ENCODE measurements at regions of chr20 and their contacts with region 1.

Region 1: DNA sequence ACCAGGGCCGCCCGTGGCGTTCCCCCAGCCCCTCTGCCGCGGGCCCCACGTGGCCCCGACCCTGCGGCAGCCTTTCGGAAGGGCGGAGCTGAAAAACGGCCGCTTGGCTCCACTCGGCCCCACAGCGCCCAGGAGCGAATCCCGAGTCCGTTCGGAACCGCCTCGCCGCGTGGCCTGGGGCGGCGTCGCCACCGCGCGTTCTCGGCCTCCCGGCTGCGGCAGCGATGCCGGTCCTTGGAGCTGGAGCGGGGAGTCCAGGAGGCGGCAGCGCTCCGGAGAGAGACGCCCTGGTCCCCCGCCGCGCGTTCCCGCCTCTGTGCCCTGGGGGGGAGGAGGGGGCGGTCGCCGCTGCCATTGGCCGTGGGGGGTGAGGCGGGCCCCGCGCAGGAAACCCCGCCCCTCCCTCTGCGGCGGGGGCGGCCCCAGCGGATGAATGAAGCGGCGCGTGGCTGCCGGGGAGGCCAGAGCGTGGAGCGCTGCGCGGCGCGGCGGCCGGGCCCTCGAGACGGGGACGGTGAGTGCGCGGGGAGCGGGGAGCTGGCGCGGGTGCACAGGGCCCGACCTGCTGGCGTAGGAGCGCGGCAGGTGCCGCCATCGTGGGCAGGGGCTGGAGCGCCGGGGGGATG is at the start of gene SLCO4A1:
- DNase-seq: peak; percentile 93
- ATAC-seq: peak; percentile 94
- H3K4me3 Mint-ChIP-seq: peak within 1 kb of the TSS; percentile 79
- H3K27ac Mint-ChIP-seq: peak within 1 kb of the TSS; percentile 69
- H3K4me1 Mint-ChIP-seq: peaks cover 11% of the 10 kb centered on the region
- H3K27me3 Mint-ChIP-seq: peaks cover 4% of the 10 kb centered on the region
- total RNA-seq, gene SLCO4A1: 40.5 to 43.4 TPM

Region 2: DNA sequence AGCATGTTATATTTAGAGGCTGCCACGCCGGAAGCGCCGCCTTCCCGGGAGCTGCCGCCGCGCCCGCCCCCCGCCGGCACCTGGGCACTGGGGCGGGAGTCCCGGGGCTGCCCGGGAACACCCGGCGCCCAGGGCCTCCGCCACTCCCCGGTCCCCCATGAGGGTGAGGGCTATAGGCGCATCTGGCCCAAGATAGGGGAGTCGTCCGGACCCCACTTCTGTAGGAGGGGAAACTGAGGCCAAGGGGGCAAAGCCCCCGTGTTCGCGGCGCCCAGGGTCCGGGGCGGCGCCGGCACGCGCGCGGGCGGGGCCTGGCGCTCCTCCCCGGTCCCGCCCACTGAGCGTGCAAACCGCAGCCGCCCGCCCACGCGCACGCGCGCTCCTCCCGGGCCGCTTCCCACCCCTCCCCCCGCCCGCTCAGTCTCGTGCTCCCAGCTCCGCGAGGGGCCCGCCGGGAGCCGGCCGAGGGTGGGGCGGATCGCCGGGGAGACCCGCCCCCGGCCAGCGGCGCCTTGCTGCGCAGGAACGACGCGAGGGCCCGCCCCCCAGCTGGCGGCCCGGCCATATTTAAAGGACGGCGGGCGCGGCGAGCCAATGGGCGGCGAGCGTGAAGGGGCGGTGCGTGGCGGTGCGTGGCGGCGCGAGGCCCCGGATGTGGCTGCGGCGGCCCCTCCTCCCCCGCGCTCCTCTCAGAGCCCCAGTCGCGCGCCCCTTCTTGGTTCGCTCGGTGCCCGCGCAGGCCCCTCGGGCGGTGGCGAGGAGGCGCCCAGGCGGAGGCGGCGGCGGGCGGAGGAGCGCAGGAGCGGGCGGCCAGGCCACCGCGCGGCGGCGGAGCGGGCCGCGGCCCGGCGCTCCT is 520.1 kb before region 1 on chr20 and contains the start of gene LSM14B:
- CTCF ChIA-PET with region 1: no interaction called
- POLR2A ChIA-PET with region 1: no interaction called
- intact Hi-C with region 1: loop called in 1 of 2 experiments (anchors 1 kb)
- DNase-seq: peak; percentile 99
- ATAC-seq: peak; percentile 84
- H3K4me3 Mint-ChIP-seq: peak within 1 kb of the TSS; percentile 80
- H3K27ac Mint-ChIP-seq: peak within 1 kb of the TSS; percentile 91
- H3K4me1 Mint-ChIP-seq: peaks cover 54% of the 10 kb centered on the region
- H3K27me3 Mint-ChIP-seq: no peaks in the 10 kb centered on the region
- total RNA-seq, gene LSM14B: 38.7 TPM

Region 3: DNA sequence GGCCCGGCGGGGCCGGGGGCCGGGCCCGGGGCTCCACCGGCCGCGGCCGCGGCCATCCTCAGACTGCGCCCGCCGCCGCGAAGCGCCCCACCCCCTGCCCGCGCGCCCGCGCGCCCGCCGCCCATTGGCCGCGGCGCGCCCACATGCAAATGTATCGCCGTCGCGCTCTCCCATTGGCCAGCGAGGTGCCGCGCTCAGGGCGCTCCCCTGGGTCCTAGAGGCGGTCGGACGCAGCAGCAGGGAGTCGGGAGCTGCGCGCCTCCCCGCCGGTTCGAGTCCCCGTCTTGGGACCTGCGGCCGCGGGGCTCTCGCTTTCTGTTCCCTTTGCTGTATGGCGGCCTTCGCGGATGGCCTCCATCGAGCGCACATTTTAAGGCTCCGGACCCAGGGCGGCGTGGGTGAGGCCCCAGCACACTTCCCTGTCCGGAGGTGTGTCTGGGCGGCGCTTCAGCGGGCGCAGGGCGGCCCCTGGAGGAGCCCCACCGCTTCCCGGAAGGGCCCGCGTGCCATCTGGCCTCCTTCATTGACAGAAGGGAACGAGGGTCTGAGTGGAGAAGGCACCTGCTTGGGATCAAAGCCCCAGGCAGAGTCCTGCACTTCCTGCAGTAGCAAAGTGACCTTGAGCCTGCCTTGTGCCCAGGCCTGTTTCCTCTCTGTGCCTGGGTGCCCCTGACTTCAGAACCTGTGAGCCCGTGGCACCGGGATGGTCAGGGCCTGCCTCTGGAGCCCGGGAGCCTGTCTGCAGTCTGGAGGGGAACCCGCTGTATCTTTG is 234.7 kb before region 1 on chr20 and contains the start of gene CABLES2:
- CTCF ChIA-PET with region 1: no interaction called
- POLR2A ChIA-PET with region 1: no interaction called
- intact Hi-C with region 1: loop called in 1 of 2 experiments (anchors 1 kb)
- DNase-seq: peak; percentile 96
- ATAC-seq: peak; percentile 93
- H3K4me3 Mint-ChIP-seq: peak within 1 kb of the TSS; percentile 72
- H3K27ac Mint-ChIP-seq: peak within 1 kb of the TSS; percentile 82
- H3K4me1 Mint-ChIP-seq: peaks cover 23% of the 10 kb centered on the region
- H3K27me3 Mint-ChIP-seq: peaks cover 2% of the 10 kb centered on the region
- total RNA-seq, gene CABLES2: 6.4 to 7.6 TPM

Region 4: GRCh38 chr20:62616728-62617621 is 25.2 kb before region 1 on chr20:
- CTCF ChIA-PET with region 1: interaction called, 10 read pairs
- POLR2A ChIA-PET with region 1: no interaction called
- intact Hi-C with region 1: no loop called
- DNase-seq: peak; percentile 88
- ATAC-seq: peak; percentile 75
- H3K4me3 Mint-ChIP-seq: peak overlapping the region; percentile 57
- H3K27ac Mint-ChIP-seq: peak overlapping the region; percentile 91
- H3K4me1 Mint-ChIP-seq: peaks cover 29% of the 10 kb centered on the region
- H3K27me3 Mint-ChIP-seq: no peaks in the 10 kb centered on the region

Region 5: GRCh38 chr20:62652051-62652926 is 10.1 kb after region 1 on chr20:
- CTCF ChIA-PET with region 1: interaction called, 4 read pairs
- POLR2A ChIA-PET with region 1: interaction called, 6 read pairs
- intact Hi-C with region 1: loop called (anchors 1 kb)
- DNase-seq: peak; percentile 82
- ATAC-seq: peak; percentile 81
- H3K4me3 Mint-ChIP-seq: peak overlapping the region; percentile 65
- H3K27ac Mint-ChIP-seq: peak overlapping the region; percentile 61
- H3K4me1 Mint-ChIP-seq: peaks cover 35% of the 10 kb centered on the region
- H3K27me3 Mint-ChIP-seq: no peaks in the 10 kb centered on the region

Region 6: DNA sequence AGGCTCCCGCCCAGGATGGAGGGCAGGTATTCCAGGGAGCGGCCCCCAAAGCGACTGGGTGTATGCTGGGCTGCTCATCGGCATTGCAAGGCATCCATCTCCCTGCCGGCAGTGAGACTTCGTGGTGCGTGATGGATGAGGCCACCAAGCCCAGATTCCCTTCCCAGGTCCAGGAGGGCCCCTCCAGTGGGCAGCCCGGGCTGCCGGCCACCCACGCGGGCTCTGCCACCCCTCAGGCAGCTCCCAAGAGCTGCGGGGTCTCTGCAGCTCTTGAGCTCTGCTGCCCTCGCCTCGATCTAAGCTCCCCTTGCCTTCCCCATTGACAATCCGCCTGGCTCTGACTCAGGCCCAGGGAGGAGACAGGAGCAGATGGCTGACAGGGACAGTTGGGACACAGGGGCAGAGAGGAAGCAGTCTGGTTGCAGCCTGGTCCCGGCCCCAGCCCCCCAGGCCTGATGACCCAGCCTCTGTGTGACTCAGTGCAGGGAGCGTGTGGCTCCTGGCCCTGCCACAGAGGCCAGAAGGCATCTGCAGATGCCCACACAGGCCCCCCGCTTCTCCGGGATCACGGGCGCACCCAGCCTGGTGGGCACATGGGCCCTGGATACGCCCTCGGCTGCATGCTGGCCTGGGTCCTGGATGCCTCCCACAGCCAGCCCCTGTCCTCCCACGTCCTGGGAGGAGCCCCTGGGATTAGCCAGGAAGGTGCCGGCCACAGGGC is 33.2 kb after region 1 on chr20:
- CTCF ChIA-PET with region 1: no interaction called
- POLR2A ChIA-PET with region 1: no interaction called
- intact Hi-C with region 1: no loop called
- DNase-seq: no peak
- ATAC-seq: no peak
- H3K4me3 Mint-ChIP-seq: no peak overlapping the region
- H3K27ac Mint-ChIP-seq: no peak overlapping the region
- H3K4me1 Mint-ChIP-seq: peaks cover 4% of the 10 kb centered on the region
- H3K27me3 Mint-ChIP-seq: no peaks in the 10 kb centered on the region

Region 7: DNA sequence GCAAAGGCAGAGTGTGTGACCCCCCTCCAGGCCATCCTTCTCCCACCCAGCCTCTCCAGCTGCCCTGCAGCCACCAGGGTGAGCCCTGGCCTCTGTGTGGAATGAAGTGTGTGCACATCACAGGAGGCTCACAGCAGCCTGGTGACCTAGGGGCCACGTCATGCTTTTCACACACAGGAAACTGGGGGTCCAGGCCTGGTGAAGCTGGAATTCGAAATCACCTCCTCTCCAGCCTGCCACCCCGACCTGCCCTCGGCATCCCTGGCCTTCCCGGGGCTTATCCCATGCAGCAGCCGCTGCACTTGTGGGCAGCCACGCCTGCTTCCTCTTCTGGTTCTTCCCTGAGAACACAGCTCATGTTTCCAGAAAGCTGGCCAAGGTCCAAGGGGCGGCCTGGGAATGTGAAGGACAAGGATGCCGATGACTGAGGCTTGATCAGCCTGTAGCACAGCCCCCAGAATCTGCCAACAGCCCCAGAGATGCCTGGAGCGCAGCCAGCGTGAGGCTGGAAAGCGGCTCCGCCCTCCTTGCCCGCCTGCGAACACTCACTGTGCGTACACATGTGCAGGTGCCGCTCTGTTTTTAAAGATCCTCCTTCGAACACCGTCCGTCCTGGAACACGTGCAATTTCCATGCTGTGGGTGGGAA is 62.3 kb after region 1 on chr20:
- CTCF ChIA-PET with region 1: no interaction called
- POLR2A ChIA-PET with region 1: no interaction called
- intact Hi-C with region 1: no loop called
- DNase-seq: no peak
- ATAC-seq: no peak
- H3K4me3 Mint-ChIP-seq: no peak overlapping the region
- H3K27ac Mint-ChIP-seq: no peak overlapping the region
- H3K4me1 Mint-ChIP-seq: peaks cover 7% of the 10 kb centered on the region
- H3K27me3 Mint-ChIP-seq: peaks cover 13% of the 10 kb centered on the region

Region 8: DNA sequence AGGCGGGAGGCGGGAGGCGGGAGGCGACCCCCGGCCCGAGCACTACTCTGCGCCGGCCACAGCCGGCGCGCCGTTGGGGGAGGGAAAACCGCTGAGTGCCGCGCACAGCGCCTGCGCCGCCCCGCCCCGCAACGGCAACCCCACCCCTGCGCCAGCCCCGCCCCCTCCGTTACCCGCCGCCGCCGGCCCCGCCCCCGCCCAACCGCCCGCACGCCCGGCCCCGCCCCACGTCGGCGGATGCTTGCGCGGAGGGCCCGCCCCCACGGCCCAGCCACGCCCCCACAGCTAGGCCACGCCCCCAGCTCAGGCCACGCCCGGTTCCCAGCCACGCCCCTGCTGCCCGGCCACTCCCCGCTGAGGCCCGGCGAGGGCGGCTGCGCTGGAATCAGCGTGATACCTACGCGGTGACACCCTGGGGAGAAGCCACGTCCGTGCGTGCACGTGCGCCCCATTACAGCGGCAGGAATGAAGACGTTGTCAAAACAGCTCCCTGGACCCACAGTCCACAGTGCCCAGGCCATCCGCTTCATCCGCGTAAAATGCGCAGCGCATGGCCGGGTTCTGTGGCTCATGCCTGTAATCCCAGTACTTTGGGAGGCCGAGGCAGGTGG is 219.7 kb after region 1 on chr20 and contains the start of gene TCFL5:
- CTCF ChIA-PET with region 1: no interaction called
- POLR2A ChIA-PET with region 1: no interaction called
- intact Hi-C with region 1: loop called in 1 of 2 experiments (anchors 1 kb)
- DNase-seq: peak; percentile 97
- ATAC-seq: peak; percentile 92
- H3K4me3 Mint-ChIP-seq: peak within 1 kb of the TSS; percentile 66
- H3K27ac Mint-ChIP-seq: peak within 1 kb of the TSS; percentile 42
- H3K4me1 Mint-ChIP-seq: peaks cover 28% of the 10 kb centered on the region
- H3K27me3 Mint-ChIP-seq: no peaks in the 10 kb centered on the region
- total RNA-seq, gene TCFL5: 5.2 to 6.6 TPM

Region 9: GRCh38 chr20:63216041-63216848 is 574.1 kb after region 1 on chr20 and contains the start of gene YTHDF1:
- CTCF ChIA-PET with region 1: no interaction called
- POLR2A ChIA-PET with region 1: no interaction called
- intact Hi-C with region 1: loop called in 1 of 2 experiments (anchors 1 kb)
- DNase-seq: peak; percentile 98
- ATAC-seq: peak; percentile 98
- H3K4me3 Mint-ChIP-seq: peak within 1 kb of the TSS; percentile 92
- H3K27ac Mint-ChIP-seq: peak within 1 kb of the TSS; percentile 88
- H3K4me1 Mint-ChIP-seq: peaks cover 43% of the 10 kb centered on the region
- H3K27me3 Mint-ChIP-seq: peaks cover 4% of the 10 kb centered on the region
- total RNA-seq, gene YTHDF1: 32.2 to 32.6 TPM